Left ventricle myocardium superior (tissue), 1 donor: ENCODE measurements at regions of chr7 and their contacts with region 1.

Region 1: DNA sequence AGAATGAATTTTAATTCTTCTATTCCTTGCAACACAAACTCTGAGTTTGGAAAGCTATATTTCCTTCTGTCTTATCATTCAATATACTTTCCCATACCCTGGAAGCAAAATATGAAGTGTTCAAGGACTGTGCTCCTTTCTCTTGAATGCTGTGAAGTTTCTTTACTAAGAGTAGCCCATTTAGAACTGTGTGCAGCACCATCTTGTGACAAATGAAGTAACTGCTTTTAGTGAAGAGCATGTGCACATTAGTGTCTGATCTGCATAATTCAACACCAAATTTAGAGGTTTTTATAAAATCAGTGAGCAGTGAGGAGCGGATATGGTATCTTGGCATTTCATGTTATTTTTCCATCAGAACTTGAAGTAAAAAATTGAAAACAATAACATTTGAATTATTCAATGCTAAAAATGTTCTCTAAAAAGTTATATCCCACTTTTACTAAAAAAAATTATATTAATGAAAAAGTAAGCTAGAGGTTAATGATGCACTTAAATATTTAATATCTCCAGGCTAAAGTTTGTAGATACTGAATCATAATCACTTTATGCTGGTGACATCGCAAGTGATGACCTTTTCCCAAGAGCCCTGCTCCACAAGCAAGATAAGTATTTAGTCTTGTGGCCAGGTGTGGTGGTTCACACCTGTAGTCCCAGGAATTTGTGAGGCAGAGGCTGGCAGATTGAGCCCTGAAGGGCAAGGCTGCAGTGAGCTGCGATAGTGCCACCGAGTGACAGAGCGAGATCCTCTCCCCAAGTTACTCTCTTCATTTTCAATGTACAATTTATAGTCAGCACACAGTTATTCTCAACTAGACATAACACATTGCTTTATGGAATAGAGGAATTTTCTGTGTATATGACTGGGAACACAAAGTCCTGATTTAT is 108.8 kb upstream of the PCLO start:
- DNase-seq: no peak
- ATAC-seq: no peak

Region 2: GRCh38 chr7:82810558-82811259 is 460.7 kb before region 1 on chr7:
- intact Hi-C with region 1: loop called (anchors 5 kb)
- DNase-seq: no peak
- ATAC-seq: peak; percentile 43

Region 3: GRCh38 chr7:83365746-83366145 is 94.3 kb after region 1 on chr7:
- intact Hi-C with region 1: no loop called
- DNase-seq: no peak
- ATAC-seq: no peak

Region 4: DNA sequence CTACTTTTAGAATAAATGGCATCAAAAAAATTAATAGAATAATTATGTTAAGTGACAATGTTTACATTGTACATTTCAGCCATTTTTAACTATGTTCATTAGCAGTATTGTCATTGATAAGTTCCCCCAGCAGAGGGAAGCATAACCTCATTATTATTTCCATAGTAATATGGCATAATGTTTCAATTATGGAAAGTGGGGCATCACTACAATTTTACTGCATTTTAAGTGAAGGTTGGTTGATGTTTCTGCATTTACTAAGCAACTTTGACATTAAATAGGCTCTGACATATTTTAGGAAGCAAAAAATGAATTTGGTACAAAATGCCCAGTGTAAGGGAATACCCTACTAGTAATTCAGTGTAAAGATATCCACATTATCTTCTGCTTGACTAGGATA is 704.8 kb after region 1 on chr7:
- intact Hi-C with region 1: no loop called
- DNase-seq: no peak
- ATAC-seq: no peak